Aorta (tissue), 5 donors: ENCODE measurements at regions of chr10 and their contacts with region 1.

Region 1: DNA sequence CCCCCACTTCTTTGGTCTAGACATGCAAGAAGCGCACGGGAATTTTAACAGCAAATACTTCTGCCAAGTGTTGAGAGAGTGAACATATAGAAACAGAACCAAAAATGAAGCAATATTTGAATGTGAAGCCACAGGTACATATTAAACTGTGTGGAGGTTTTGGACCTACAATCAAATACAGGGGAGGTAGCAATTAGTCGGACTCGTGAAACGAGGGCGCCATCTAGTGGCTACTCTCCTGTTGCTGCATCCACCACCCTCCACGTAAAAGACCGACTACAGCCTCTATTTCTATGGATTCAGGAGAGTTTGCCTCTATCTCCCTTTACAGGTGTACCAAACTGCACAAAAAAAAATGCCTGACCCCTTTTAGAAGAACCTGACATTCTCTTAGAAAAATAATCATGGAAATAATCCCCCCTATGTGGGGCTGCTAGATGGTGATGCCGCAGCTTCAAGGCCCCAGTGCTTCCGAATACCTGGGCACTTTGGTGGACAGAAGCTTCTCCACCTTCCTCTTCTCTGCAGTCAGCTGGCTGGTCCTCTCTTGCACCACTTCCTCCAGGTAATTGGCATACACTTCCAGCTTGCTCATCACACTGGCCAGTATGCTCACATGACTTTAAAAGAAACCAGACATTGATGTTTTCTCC is 31.7 kb downstream of the TECTB start:
- DNase-seq: peak; percentile 83 to 93
- ATAC-seq: peak; percentile 87
- H3K4me3 ChIP-seq: no peak overlapping the region
- H3K27ac ChIP-seq: no peak overlapping the region
- H3K4me1 ChIP-seq: no peaks in the 10 kb centered on the region
- H3K27me3 ChIP-seq: no peaks in the 10 kb centered on the region

Region 2: GRCh38 chr10:111756217-111757061 is 558.5 kb before region 1 on chr10:
- intact Hi-C with region 1: loop called in 1 of 2 experiments (anchors 10 kb)
- DNase-seq: peak in 1 of 2 donors; percentile 49
- ATAC-seq: no peak
- H3K4me3 ChIP-seq: no peak overlapping the region
- H3K27ac ChIP-seq: no peak overlapping the region
- H3K4me1 ChIP-seq: no peaks in the 10 kb centered on the region
- H3K27me3 ChIP-seq: no peaks in the 10 kb centered on the region

Region 3: DNA sequence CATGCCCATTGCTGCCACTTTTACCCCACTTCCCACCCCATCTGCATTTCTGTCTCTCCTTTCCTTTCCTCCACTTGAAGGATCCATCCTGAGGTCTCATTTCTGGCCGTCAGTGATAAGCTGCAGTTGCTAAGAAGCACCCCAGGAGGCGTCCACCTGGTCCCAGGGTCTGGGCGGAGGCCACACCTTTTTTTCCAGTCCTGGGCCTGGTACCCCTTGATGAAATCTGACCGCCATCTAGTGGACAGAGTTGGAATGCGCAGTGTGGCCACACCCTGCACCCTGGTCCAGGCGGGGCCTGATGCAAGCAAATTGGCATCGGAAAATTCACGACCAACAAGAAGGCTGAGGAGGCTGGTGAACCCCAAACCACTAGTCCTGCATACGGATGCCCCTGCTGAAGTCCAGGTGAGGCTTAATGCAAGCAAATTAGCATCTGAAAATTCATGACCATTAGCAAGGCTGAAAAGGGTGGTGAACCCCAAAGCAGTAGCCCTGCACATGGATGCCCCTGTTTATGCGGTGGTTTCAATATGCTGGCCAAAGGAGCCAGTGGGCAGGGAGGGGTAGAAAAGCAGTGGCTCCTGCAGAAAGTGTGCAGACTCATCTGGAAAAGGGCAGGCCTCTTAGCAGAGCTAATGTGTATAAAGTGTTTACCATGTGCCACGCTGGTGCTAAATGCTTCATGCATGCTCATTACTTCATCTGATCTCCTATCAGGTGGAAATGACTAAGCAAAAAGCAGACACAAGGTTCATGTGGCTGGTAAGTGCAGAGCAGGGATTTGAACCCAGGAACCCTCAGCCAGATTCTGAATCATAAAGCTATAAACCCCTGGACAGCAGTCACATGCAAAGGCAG is 174.6 kb before region 1 on chr10:
- intact Hi-C with region 1: loop called (anchors 5 kb)
- DNase-seq: peak; percentile 69 to 84
- ATAC-seq: peak; percentile 68
- H3K4me3 ChIP-seq: no peak overlapping the region
- H3K27ac ChIP-seq: no peak overlapping the region
- H3K4me1 ChIP-seq: no peaks in the 10 kb centered on the region
- H3K27me3 ChIP-seq: no peaks in the 10 kb centered on the region

Region 4: GRCh38 chr10:112434988-112435619 is 120.2 kb after region 1 on chr10:
- intact Hi-C with region 1: loop called in 1 of 2 experiments (anchors 10 kb)
- DNase-seq: no peak
- ATAC-seq: no peak
- H3K4me3 ChIP-seq: no peak overlapping the region
- H3K27ac ChIP-seq: no peak overlapping the region
- H3K4me1 ChIP-seq: no peaks in the 10 kb centered on the region
- H3K27me3 ChIP-seq: no peaks in the 10 kb centered on the region

Region 5: GRCh38 chr10:112842832-112843360 is 527.9 kb after region 1 on chr10:
- intact Hi-C with region 1: no loop called
- DNase-seq: no peak
- ATAC-seq: peak; percentile 40
- H3K4me3 ChIP-seq: no peak overlapping the region
- H3K27ac ChIP-seq: no peak overlapping the region
- H3K4me1 ChIP-seq: no peaks in the 10 kb centered on the region
- H3K27me3 ChIP-seq: no peaks in the 10 kb centered on the region